Posterior cingulate gyrus (tissue), 11 donors: ENCODE measurements at regions of chr3 and their contacts with region 1.

Region 1: DNA sequence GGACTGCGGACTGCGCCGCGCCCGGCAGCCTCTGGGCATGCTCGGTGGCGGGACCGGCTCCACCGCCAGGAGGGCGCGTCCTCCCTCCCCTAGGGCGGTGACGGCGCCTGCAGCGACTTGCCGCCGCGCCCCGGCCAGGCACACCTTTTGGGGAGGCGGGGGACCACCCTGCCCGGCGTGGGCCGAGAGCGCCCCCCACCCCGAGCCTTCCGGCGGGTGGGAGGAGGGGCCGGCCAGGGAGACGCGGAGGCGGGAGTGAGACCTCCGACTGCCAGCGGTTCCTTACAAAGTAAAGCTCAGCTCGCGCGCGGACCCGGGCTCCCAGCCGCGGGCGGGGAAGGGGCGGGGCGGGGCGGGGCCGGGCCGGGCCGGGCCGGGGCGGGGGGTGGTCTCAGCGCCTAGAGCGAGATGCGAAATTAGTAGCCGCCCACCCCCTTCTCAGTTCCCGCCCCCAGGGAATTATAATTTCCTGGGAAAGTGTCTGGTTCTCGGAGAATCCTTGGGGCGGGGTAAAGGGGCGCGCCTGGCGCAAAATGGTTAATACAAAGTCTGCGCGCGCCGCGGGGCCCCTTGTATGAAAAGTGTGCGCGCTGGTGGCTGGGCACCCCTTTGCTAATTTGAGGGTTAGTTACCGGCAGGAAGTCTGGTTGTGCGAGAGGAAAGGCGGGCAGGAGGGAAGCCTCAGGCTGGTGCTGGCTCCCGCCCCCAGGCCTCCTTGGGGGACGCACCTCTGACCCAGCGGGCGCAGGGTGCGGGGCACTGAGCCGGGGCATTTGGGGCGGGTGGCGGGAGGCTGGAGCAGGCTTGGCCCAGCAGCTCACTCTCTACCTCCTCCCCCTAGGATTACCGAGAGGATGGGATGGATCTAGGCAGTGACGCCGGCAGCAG is 224.8 kb upstream of the IL12A start:
- DNase-seq: peak; percentile 42 to 96 (median 63)

Region 2: GRCh38 chr3:159443266-159443665 is 320.6 kb before region 1 on chr3:
- intact Hi-C with region 1: no loop called
- DNase-seq: no peak

Region 3: GRCh38 chr3:159645874-159646273 is 118.0 kb before region 1 on chr3:
- intact Hi-C with region 1: no loop called
- DNase-seq: no peak

Region 4: GRCh38 chr3:159783777-159784743 is 20.2 kb after region 1 on chr3:
- intact Hi-C with region 1: no loop called
- DNase-seq: no peak

Region 5: GRCh38 chr3:159796744-159797143 is 32.9 kb after region 1 on chr3:
- intact Hi-C with region 1: loop called (anchors 2 kb)
- DNase-seq: no peak

Region 6: GRCh38 chr3:159804726-159805410 is 41.0 kb after region 1 on chr3:
- intact Hi-C with region 1: loop called (anchors 2 kb)
- DNase-seq: peak; percentile 49 to 95 (median 77)

Region 7: DNA sequence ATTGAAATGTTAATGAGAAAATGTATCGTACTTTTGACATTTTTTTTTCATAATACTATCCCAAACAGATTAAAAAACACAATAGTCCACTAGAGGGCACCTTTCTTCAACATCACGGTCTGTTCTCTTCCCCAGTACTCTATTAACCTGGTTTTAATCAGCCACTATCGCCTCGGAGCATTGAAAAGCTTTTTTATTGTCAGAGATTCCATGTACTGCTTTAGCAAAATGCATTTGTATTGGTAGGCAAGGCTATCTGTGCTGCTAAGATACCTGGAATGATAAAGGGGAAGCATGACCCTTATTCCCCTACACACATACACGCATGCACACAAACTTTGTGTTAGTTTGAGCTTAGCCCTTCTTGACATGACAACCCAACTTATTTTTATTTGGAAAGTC is 64.7 kb after region 1 on chr3:
- intact Hi-C with region 1: no loop called
- DNase-seq: no peak